ENCODE measurements at regions of chr2 and their contacts with region 1.

Region 1: GRCh38 chr2:189412330-189412953 is 28.8 kb upstream of the WDR75 start:
- H3K4me3 Mint-ChIP-seq: no peak overlapping the region
- H3K27ac Mint-ChIP-seq: no peak overlapping the region
- H3K4me1 Mint-ChIP-seq: no peaks in the 10 kb centered on the region
- H3K27me3 Mint-ChIP-seq: no peaks in the 10 kb centered on the region

Region 2: DNA sequence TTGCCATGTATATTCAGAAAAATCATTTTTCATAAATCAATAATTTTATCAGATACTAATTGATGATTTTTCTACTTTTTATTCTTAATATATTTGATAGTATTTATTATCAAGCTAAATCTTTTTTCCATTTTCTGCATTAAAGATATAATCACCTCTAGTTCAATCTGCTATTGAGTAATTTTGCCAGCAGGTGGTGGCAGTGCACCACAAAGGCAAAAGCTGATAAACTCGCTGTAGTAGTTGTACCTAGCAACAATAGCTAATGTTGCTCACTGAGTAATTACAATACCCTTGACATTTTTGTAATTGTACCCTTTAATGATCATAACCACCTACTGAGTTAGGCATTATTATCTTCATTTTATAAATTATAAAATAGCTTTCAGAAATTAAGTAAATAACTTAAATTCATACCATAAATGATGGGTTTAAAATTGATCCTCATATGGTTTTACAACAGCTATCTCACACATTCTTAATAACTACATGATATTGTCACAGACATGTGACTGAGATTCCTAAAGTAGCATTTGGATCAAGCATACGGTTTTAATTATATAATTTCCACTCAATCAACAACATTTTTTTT is 1912.4 kb before region 1 on chr2:
- intact Hi-C with region 1: loop called (anchors 2 kb)
- H3K4me3 Mint-ChIP-seq: no peak overlapping the region
- H3K27ac Mint-ChIP-seq: no peak overlapping the region
- H3K4me1 Mint-ChIP-seq: peaks cover 11% of the 10 kb centered on the region
- H3K27me3 Mint-ChIP-seq: no peaks in the 10 kb centered on the region

Region 3: DNA sequence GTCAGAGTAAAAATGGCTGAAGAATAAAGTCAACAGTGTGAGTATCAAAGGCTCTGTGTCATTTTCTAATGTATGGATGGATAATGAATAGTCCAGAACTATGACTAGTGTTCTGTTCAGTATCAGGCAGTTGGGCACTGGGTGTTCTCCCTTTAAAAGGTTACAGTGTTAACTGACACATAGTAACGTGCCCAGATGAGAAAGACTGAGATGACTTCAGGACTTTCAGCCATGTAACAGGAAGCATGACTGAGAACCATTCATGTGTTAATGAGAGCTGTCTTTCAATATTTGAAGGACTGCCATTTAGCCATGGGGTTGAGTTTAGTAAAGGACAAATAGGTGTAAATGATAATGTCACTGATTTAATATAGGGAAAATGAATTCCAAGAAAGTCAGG is 933.7 kb before region 1 on chr2:
- intact Hi-C with region 1: no loop called
- H3K4me3 Mint-ChIP-seq: no peak overlapping the region
- H3K27ac Mint-ChIP-seq: no peak overlapping the region
- H3K4me1 Mint-ChIP-seq: no peaks in the 10 kb centered on the region
- H3K27me3 Mint-ChIP-seq: no peaks in the 10 kb centered on the region

Region 4: GRCh38 chr2:188524519-188525113 is 887.8 kb before region 1 on chr2:
- intact Hi-C with region 1: loop called (anchors 2 kb)
- H3K4me3 Mint-ChIP-seq: no peak overlapping the region
- H3K27ac Mint-ChIP-seq: no peak overlapping the region
- H3K4me1 Mint-ChIP-seq: no peaks in the 10 kb centered on the region
- H3K27me3 Mint-ChIP-seq: no peaks in the 10 kb centered on the region

Region 5: GRCh38 chr2:189096769-189097447 is 315.5 kb before region 1 on chr2:
- intact Hi-C with region 1: loop called (anchors 1 kb)
- H3K4me3 Mint-ChIP-seq: no peak overlapping the region
- H3K27ac Mint-ChIP-seq: no peak overlapping the region
- H3K4me1 Mint-ChIP-seq: no peaks in the 10 kb centered on the region
- H3K27me3 Mint-ChIP-seq: no peaks in the 10 kb centered on the region

Region 6: GRCh38 chr2:189142893-189143759 is 269.3 kb before region 1 on chr2:
- intact Hi-C with region 1: loop called (anchors 1 kb)
- H3K4me3 Mint-ChIP-seq: no peak overlapping the region
- H3K27ac Mint-ChIP-seq: no peak overlapping the region
- H3K4me1 Mint-ChIP-seq: no peaks in the 10 kb centered on the region
- H3K27me3 Mint-ChIP-seq: no peaks in the 10 kb centered on the region

Region 7: GRCh38 chr2:189569295-189569910 is 157.0 kb after region 1 on chr2:
- intact Hi-C with region 1: no loop called
- H3K4me3 Mint-ChIP-seq: peak overlapping the region; percentile 51
- H3K27ac Mint-ChIP-seq: peak overlapping the region; percentile 82
- H3K4me1 Mint-ChIP-seq: peaks cover 65% of the 10 kb centered on the region
- H3K27me3 Mint-ChIP-seq: no peaks in the 10 kb centered on the region

Region 8: DNA sequence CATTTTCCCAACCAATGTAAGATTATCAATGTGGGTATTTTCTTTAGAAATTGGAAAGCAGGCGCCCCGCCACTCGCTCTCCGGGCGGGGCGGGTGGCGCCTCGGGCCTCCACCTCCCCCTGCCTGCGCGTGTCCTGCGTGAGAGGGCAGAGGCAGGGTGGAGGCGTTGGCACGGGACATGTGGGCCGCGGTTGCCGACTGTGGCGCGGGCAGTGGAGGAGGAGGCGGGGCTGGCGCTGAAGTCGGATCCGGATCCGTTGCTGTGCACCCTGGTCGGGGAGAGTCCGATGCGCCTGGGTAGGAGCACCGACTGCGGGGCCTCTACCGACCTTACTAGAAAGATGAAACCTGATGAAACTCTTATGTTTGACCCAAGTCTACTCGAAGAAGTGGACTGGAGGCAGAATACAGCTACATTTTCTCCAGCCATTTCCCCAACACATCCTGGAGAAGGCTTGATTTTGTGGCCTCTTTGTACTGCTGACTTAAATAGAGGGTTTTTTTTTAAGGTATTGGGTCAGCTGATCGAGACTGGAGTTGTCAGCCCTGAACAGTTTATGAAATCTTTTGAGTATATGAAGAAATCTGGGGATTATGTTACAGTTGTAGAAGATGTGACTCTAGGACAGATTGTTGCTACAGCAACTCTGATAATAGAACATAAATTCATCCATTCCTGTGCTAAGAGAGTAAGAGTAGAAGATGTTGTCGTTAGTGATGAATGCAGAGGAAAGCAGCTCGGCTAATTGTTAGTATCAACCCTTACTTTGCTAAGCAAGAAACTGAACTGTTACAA is 409.7 kb after region 1 on chr2:
- intact Hi-C with region 1: no loop called
- H3K4me3 Mint-ChIP-seq: no peak overlapping the region
- H3K27ac Mint-ChIP-seq: no peak overlapping the region
- H3K4me1 Mint-ChIP-seq: peaks cover 7% of the 10 kb centered on the region
- H3K27me3 Mint-ChIP-seq: no peaks in the 10 kb centered on the region

Measured in dendritic cell treated with granulocyte-macrophage colony-stimulating factor and Interleukin-4, amounts not matched to agents 40 ng/mL and 50 ng/mL, for 4 days (primary cell).